ENCODE measurements at regions of chr2 and their contacts with region 1.

Region 1: DNA sequence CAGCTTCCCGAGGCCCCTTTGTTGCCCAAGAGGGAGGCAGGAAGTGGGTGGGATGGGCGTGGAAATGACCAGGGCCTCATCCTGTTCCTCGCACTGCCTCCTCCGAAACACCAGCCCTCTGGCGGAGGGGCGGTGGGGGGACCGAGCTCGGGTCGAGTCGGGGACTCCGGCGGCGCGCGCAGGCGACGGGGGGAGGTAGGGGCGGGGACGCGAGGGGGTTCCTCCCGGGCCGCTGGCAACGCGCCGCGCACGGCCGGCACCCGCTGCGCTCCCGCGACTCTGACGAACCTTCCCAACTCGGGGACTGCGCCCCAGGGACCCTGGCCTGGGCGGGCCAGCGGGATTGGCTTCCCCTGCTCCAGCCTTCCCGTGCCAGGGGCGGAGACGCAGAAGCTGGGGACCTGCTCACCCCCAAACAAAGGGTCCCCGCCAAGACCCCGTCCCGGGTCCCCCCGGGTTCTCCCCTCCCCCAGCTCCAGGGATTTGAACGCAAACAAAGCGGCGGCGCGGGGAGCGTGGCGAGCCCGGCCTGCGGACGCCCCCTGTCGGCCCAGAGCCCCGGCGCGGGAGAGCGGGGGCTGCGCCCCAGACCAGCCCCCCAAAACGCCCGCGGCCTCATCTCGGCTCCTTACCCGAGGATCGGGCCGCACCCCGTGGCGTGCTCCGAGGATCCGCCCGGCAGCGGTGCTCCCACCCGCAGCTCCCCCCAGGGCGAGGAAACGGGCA is 1.2 kb downstream of the SEMA4C start:
- DNase-seq: peak; percentile 33
- ATAC-seq: peak; percentile 78
- H3K4me3 ChIP-seq: peak overlapping the region; percentile 95
- H3K27ac ChIP-seq: peak overlapping the region; percentile 86
- H3K4me1 ChIP-seq: peaks cover 23% of the 10 kb centered on the region
- H3K27me3 ChIP-seq: no peaks in the 10 kb centered on the region; a peak in 1 of 4 replicates
- CTCF ChIP-seq: peak; percentile 59 to 62 (median 60); a peak in 5 of 6 replicates
- EP300 ChIP-seq: no peak
- POLR2A ChIP-seq: peak; percentile 72
- RAD21 ChIP-seq: peak; percentile 38

Region 2: DNA sequence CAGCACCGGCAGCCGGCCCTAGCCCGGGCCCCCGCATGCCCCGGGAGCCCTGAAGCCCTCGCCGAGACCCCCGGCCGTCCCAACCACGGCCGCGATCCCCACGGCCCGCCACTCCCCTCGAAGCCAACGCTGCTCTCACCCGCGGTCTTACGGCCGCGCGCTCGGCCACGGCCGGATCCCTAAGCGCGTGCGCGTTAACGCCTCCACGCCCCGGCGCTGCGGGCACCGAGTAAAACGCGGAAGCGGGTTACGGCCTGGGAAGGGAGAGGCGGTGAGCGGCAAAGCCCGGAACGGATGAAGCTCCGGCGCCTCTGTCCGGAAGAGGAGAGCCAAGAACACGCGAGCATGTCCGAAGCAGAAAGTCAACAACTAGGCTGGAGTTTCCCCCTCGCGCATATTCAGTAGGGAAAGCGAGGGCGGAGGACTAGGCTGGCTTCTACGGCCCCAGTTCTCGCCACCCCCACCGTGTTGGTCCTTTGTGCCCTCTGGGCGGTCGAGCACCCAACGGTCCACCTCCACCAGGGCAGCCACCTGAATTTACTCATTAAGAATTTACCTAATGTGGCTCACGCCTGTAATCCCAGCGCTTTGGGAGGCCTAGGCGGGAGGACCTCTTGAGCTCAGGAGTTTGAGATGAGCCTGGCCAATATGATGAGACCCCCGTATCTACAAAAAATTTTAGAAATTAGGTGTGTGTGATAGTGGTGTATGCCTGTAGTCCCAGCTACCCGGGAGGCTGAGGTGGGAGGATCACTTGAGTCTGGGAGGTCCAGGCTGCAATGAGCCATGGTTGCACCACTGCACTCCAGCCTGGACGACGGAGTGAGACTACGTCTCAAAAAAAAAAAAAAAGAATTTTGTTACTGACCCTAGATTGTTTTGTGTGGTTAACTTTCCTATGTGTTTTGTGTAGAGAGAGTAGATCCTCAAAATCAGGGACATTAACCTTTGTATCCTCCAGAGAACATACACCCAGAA is 230.3 kb before region 1 on chr2 and contains the start of gene KANSL3:
- CTCF ChIA-PET with region 1: no interaction called
- POLR2A ChIA-PET with region 1: interaction called, 3 read pairs
- RAD21 ChIA-PET with region 1: no interaction called
- SMC1A ChIA-PET with region 1: no interaction called
- in situ Hi-C with region 1: no loop called
- intact Hi-C with region 1: loop called (anchors 5 kb)
- DNase-seq: peak; percentile 64
- ATAC-seq: peak; percentile 76
- H3K4me3 ChIP-seq: peak within 1 kb of the TSS; percentile 89
- H3K27ac ChIP-seq: peak within 1 kb of the TSS; percentile 84
- H3K4me1 ChIP-seq: no peaks in the 10 kb centered on the region; the same call in 1 of the 2 replicates
- H3K27me3 ChIP-seq: no peaks in the 10 kb centered on the region
- CTCF ChIP-seq: no peak
- EP300 ChIP-seq: peak in 1 of 2 experiments; percentile 66; a peak in 1 of 4 replicates
- POLR2A ChIP-seq: peak; percentile 99
- RAD21 ChIP-seq: no peak
- polyA plus RNA-seq, gene KANSL3: 5.6 to 6.6 TPM

Region 3: GRCh38 chr2:96747136-96747535 is 121.6 kb before region 1 on chr2:
- CTCF ChIA-PET with region 1: no interaction called
- POLR2A ChIA-PET with region 1: no interaction called
- RAD21 ChIA-PET with region 1: no interaction called
- SMC1A ChIA-PET with region 1: no interaction called
- in situ Hi-C with region 1: no loop called
- intact Hi-C with region 1: no loop called
- DNase-seq: no peak
- ATAC-seq: no peak
- H3K4me3 ChIP-seq: no peak overlapping the region
- H3K27ac ChIP-seq: no peak overlapping the region
- H3K4me1 ChIP-seq: no peaks in the 10 kb centered on the region
- H3K27me3 ChIP-seq: no peaks in the 10 kb centered on the region
- CTCF ChIP-seq: no peak
- EP300 ChIP-seq: no peak
- POLR2A ChIP-seq: no peak
- RAD21 ChIP-seq: no peak

Region 4: DNA sequence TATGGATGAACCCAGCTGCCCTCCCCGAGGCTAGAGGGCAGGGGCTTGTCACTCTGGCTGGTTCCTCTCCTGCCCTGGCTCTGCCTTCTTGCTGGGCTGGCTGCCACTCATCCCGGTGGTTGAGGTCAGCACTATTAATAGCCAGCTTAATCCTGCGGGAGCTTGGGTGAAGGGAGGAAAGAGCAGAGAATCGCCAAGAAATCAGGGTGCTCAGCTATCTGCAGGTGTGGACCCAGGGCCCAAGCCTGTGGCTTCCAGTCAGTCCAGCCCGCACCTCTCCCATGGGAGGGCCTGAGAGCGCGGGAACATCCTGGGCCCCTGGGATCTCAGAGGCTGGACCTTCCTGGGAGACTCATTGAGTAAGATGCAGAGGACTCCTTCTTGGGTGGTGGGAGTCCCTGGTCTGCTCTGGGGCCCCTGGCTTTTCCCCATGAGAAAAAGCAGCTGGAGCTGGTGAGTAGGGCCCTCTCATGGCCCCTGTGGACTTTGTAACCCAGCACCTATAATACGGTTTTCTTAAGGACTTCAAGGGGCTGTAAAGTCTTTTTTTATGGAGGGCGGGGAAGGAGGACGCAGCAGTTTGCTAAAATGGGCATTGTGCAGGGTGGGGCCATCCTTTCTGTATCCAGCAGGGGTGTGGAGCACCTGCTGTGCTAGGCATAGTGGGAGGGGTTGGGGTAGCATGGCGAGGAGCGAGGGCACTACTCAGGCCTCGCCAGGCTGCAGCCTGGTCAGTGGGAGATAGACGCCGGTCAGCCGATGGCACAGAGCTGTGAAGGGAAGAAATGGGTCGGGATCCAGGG is 80.1 kb before region 1 on chr2:
- CTCF ChIA-PET with region 1: no interaction called
- POLR2A ChIA-PET with region 1: no interaction called
- RAD21 ChIA-PET with region 1: no interaction called
- SMC1A ChIA-PET with region 1: no interaction called
- in situ Hi-C with region 1: no loop called
- intact Hi-C with region 1: no loop called
- DNase-seq: no peak
- ATAC-seq: no peak
- H3K4me3 ChIP-seq: no peak overlapping the region
- H3K27ac ChIP-seq: no peak overlapping the region
- H3K4me1 ChIP-seq: no peaks in the 10 kb centered on the region
- H3K27me3 ChIP-seq: no peaks in the 10 kb centered on the region
- CTCF ChIP-seq: no peak
- EP300 ChIP-seq: no peak
- POLR2A ChIP-seq: no peak
- RAD21 ChIP-seq: no peak

Measured in GM12878 (cell line).